ENCODE measurements at regions of chr9 and their contacts with region 1.

Region 1: DNA sequence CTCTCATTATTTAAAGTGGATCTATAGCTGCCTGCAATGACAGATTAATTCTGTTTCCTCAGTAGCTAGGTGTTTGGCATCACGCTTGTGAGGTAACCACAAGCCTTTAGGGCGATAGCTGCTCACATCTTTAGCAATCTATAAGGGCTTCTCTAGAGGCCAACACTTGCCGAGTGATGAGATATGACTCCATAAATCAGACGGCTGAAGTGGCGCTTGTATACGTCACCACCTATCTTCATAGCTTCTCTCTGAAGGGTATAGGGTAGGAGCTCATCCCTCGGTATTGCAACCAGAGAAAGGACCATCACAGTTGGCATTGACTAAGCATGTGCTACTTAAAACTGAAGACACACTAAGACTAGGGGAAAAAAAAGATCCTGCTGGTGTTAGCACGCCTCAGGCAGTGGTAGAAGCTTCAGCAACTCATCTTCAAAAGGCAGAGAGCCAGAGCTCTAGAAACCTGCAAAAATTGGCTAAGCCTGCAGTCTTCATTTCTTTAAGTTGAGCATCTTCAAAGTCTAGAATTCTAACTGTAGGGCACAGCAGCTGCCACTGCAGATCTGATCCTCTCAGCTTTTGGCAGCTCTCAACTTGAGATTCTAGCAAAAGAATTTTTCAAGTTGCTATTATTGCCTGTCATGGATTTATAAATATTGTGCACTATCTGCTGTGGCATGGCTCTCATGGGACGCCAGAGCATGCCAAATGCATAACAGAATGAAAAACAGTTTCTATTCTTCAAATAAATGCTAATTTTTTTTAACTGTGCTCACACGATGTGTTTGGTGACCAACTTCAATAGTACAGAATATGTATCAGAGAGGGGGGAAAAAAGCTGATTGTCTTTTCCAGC is 37.5 kb downstream of the PSMB7 start:
- DNase-seq: no peak

Region 2: GRCh38 chr9:124340219-124341069 is 37.3 kb before region 1 on chr9:
- intact Hi-C with region 1: loop called in 1 of 2 experiments (anchors 1 kb)
- DNase-seq: no peak

Region 3: DNA sequence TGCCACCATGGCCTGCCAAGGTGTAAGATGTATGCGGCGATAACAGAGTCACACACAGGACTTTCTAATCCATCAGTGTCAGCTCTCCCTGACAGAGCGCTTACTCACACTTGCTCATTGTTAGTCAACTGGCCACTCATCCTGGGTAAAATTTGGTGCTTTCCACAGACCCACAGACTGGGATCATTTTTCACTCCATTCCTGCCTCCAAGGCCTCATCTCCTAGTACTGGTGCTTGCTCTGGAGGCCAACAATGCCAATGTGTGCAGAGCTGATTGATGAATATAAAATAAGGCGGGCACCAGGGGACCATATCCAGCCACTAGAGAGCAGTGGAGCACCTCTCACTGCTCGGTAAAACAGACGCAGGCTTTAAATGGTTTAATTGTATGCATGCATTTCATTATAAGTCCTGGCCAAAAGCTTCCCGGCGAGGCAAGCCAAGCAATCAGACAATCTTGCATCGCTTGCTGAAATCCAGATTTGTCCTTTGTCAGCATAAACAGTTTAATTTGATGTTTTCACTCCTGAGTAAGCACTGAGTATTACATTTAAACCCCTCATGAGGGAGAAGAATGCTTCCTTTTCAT is 15.2 kb after region 1 on chr9:
- intact Hi-C with region 1: no loop called
- DNase-seq: no peak